ENCODE measurements at regions of chr4 and their contacts with region 1.

Region 1: GRCh38 chr4:155529272-155529671 is 137.4 kb upstream of the GUCY1A1 start:
- DNase-seq: no peak
- ATAC-seq: no peak
- H3K4me3 ChIP-seq: no peak overlapping the region
- H3K27ac ChIP-seq: no peak overlapping the region
- H3K4me1 ChIP-seq: no peaks in the 10 kb centered on the region
- H3K27me3 ChIP-seq: no peaks in the 10 kb centered on the region
- CTCF ChIP-seq: peak; percentile 35
- POLR2A ChIP-seq: no peak
- RAD21 ChIP-seq: peak; percentile 44; the same call in 1 of the 2 replicates

Region 2: GRCh38 chr4:155758481-155759404 is 229.5 kb after region 1 on chr4 and contains the start of gene GUCY1B1:
- CTCF ChIA-PET with region 1: no interaction called
- POLR2A ChIA-PET with region 1: no interaction called
- dilution Hi-C with region 1: no loop called
- in situ Hi-C with region 1: no loop called
- intact Hi-C with region 1: loop called (anchors 5 kb)
- DNase-seq: peak; percentile 94
- ATAC-seq: peak; percentile 98
- H3K4me3 ChIP-seq: peak within 1 kb of the TSS; percentile 67
- H3K27ac ChIP-seq: peak within 1 kb of the TSS; percentile 28; the same call in 1 of the 2 replicates
- H3K4me1 ChIP-seq: peaks cover 5% of the 10 kb centered on the region; the same call in 1 of the 2 replicates
- H3K27me3 ChIP-seq: no peaks in the 10 kb centered on the region
- CTCF ChIP-seq: peak; percentile 52
- POLR2A ChIP-seq: no peak
- RAD21 ChIP-seq: peak; percentile 44
- total RNA-seq, gene GUCY1B1: 2.8 and 2.9 TPM in 2 replicates

Region 3: GRCh38 chr4:155777971-155778735 is 248.9 kb after region 1 on chr4:
- CTCF ChIA-PET with region 1: interaction called, 3 read pairs
- POLR2A ChIA-PET with region 1: interaction called, 3 read pairs
- dilution Hi-C with region 1: no loop called
- in situ Hi-C with region 1: no loop called
- intact Hi-C with region 1: loop called (anchors 5 kb)
- DNase-seq: peak; percentile 84
- ATAC-seq: peak; percentile 81
- H3K4me3 ChIP-seq: no peak overlapping the region
- H3K27ac ChIP-seq: peak overlapping the region; percentile 75; the same call in 1 of the 2 replicates
- H3K4me1 ChIP-seq: peaks cover 7% of the 10 kb centered on the region
- H3K27me3 ChIP-seq: no peaks in the 10 kb centered on the region
- CTCF ChIP-seq: no peak
- POLR2A ChIP-seq: no peak
- RAD21 ChIP-seq: no peak